Activated CD4-positive, alpha-beta T cell treated with anti-CD3 and anti-CD28 coated beads, Interleukin-2, amount 10 ng/mL, durations not matched to agents 24 days and 14 days (primary cell): ENCODE measurements at regions of chr15 and their contacts with region 1.

Region 1: GRCh38 chr15:83011271-83012075 is at the start of gene C15orf40:
- DNase-seq: peak; percentile 96
- H3K4me3 Mint-ChIP-seq: peak within 1 kb of the TSS; percentile 89
- H3K27ac Mint-ChIP-seq: peak within 1 kb of the TSS; percentile 94
- H3K4me1 Mint-ChIP-seq: peaks cover 40% of the 10 kb centered on the region
- H3K27me3 Mint-ChIP-seq: no peaks in the 10 kb centered on the region
- total RNA-seq, gene C15orf40: 23.6 and 30.8 TPM in 2 replicates

Region 2: DNA sequence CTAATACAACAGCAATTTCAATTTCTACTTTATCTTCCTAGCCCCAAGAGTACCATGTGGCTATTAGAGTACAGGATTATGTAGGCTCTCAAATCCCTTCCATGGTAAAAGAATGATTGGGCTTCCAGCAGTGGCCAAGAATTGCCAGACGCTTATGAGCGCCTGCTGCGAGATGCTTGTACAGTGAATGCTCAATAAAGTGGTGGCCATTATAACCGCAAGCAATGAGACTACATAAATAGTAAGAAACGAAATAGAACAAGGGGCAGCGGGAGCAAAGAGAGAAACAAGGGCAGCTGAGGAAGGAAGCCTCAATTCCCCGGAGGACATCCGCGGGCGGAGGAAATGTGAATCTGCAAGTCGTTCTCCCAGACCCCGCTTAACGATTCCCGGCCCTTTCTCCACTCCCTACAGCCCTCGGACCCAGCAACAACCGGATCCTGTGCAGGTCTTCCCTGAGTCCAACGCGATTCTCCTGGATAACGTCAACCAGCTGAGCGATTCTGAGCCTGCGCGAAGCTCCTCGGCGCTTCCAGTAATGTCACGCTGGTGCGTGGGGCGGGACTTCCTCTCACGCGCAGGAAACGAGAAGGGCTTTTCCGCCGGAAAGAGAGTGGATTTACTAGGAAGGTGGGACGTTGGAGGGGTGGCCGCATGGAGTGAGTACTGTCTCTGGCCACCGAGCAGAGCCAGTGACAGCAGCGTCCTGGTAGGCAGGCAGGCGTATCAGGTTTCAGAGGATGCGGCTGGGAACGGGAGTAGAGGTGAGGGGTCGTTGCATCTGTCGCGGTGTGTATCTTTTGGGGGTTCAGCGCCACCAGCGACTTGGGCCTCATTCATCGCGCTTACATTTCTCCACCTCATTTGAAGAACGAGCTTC is 261.3 kb before region 1 on chr15:
- intact Hi-C with region 1: loop called (anchors 5 kb)
- DNase-seq: peak; percentile 96
- H3K4me3 Mint-ChIP-seq: peak overlapping the region; percentile 99
- H3K27ac Mint-ChIP-seq: peak overlapping the region; percentile 97
- H3K4me1 Mint-ChIP-seq: peaks cover 23% of the 10 kb centered on the region
- H3K27me3 Mint-ChIP-seq: no peaks in the 10 kb centered on the region

Region 3: DNA sequence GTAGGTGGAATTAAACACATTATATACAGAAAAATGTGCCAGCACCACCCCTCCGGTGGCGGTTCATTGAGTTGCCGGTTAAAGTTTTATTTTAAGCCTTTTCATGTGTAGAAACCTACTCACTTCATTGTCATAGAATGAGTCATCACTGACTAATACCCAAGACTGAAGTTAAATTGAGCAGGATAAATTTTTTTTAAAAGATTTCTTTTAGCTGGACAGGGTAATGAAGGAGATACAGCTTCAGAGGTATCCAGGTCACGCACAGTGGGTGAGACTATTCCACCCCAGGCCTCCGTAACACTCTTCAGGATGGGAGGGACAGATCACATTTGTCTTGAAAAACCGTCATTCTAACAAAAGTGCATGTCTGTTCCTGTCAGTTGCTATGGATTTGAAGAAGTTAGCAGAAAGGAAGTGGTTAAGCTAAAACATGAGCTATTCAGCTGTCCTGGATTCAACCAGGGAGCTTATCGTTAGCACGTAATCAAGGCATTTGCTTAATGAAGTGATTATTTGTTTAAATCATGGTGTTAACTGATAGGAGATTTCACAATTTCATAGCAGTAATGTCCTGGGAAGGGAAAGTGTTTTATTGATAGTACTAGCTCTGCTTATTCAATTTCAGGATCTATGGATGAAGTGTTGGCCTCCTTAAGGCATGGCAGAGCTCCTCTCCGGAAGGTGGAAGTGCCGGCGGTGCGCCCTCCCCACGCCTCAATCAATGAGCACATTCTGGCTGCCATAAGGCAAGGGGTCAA is 178.7 kb before region 1 on chr15:
- intact Hi-C with region 1: loop called (anchors 5 kb)
- DNase-seq: peak; percentile 80
- H3K4me3 Mint-ChIP-seq: peak overlapping the region; percentile 65
- H3K27ac Mint-ChIP-seq: peak overlapping the region; percentile 95
- H3K4me1 Mint-ChIP-seq: peaks cover 40% of the 10 kb centered on the region
- H3K27me3 Mint-ChIP-seq: no peaks in the 10 kb centered on the region

Region 4: DNA sequence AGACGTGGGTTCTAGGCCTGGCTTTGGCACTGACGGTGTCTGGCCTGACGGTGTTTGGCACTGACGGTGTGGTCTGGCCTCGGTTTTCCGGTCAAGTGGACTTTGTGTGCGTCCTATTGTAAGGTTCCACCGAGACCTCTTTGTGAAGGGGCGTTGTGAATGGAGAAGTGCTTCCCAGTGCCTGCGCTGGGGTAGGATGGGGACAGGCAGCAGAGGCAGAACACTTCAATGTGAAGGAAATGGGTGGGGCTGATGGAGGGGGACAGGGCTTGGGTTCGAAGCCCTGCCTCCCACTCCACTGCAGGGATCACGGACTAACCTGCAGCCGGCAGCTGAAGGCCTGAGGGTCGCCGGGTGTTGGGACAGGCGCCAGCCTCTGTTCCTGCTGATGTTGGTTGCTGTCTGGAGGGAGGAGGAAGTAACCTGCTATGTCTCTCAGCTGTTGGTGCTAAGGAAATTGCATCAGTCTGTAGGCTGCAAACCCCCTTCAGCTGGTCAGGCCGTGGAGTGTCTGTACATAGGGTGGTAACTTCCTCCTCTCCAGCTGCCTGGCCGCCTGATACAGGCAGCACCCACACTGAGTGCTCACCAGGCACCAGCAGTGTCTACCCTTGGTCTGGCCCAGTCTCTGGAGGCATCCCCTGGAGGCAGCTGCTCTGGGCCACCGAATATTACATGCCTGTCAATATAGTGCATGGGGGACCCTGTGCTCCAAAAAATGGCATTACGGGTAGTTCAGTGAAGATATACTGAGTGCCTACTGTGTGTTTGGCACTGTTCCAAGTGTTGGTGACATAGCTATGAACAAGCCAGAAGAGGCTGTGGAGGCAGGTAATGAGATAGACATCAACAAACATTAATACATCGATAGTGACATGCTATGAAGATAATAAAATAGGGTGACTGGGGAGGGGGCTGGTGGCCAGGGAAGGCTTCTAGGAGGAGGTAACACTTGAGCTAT is 97.1 kb after region 1 on chr15:
- intact Hi-C with region 1: loop called (anchors 5 kb)
- DNase-seq: peak; percentile 81
- H3K4me3 Mint-ChIP-seq: peak overlapping the region; percentile 89
- H3K27ac Mint-ChIP-seq: peak overlapping the region; percentile 54
- H3K4me1 Mint-ChIP-seq: peaks cover 40% of the 10 kb centered on the region
- H3K27me3 Mint-ChIP-seq: peaks cover 23% of the 10 kb centered on the region

Region 5: GRCh38 chr15:83248151-83249029 is 236.9 kb after region 1 on chr15:
- intact Hi-C with region 1: loop called (anchors 2 kb)
- DNase-seq: peak; percentile 84
- H3K4me3 Mint-ChIP-seq: no peak overlapping the region
- H3K27ac Mint-ChIP-seq: no peak overlapping the region
- H3K4me1 Mint-ChIP-seq: no peaks in the 10 kb centered on the region
- H3K27me3 Mint-ChIP-seq: peaks cover 51% of the 10 kb centered on the region

Region 6: DNA sequence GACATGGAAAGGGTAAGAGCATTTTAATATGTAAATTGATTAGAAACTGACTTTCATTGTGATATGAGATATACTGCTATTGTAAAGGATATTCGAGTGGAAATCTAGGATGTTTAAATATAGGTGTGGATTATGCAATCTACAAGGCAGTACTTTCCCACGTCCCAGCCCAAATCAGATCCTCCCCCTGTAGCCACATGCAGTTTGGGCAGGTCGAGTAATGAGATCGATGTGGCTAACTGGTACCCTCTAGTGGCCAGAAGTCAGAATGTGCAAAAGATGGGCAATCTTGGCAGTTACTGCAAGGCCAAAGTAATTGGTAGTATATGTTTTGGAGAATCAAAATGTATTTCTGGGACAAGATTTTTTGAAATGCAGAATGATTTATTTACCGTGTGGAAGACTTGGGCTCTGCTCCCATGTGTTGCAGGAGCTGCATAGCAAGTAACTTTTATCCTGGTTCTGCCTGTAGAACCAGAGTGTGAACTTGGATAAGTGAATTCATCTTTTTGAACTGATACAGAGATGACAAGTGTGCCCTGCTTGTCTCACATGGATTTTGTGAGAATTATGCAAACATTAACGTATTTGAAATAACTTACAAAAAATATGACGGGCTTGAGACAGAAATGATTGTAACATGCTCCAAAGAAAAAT is 548.0 kb after region 1 on chr15:
- intact Hi-C with region 1: loop called (anchors 2 kb)
- DNase-seq: peak; percentile 85
- H3K4me3 Mint-ChIP-seq: no peak overlapping the region
- H3K27ac Mint-ChIP-seq: no peak overlapping the region
- H3K4me1 Mint-ChIP-seq: no peaks in the 10 kb centered on the region
- H3K27me3 Mint-ChIP-seq: peaks cover 3% of the 10 kb centered on the region